Activated naive CD8-positive, alpha-beta T cell treated with anti-CD3 and anti-CD28 coated beads, Interleukin-2, amount 10 ng/mL, durations not matched to agents 7 days and 5 days (primary cell): ENCODE measurements at regions of chr1 and their contacts with region 1.

Region 1: GRCh38 chr1:225467193-225468020 is 39.6 kb upstream of the LBR start:
- DNase-seq: peak; percentile 84
- ATAC-seq: peak; percentile 87
- H3K4me3 Mint-ChIP-seq: peak overlapping the region; percentile 92
- H3K27ac Mint-ChIP-seq: peak overlapping the region; percentile 97
- H3K4me1 Mint-ChIP-seq: peaks cover 24% of the 10 kb centered on the region
- H3K27me3 Mint-ChIP-seq: no peaks in the 10 kb centered on the region

Region 2: GRCh38 chr1:225428068-225428880 is 39.1 kb before region 1 on chr1:
- POLR2A ChIA-PET with region 1: interaction called, 92 read pairs
- DNase-seq: peak; percentile 94
- ATAC-seq: peak; percentile 93
- H3K4me3 Mint-ChIP-seq: peak overlapping the region; percentile 87
- H3K27ac Mint-ChIP-seq: peak overlapping the region; percentile 89
- H3K4me1 Mint-ChIP-seq: peaks cover 43% of the 10 kb centered on the region
- H3K27me3 Mint-ChIP-seq: peaks cover 2% of the 10 kb centered on the region

Region 3: DNA sequence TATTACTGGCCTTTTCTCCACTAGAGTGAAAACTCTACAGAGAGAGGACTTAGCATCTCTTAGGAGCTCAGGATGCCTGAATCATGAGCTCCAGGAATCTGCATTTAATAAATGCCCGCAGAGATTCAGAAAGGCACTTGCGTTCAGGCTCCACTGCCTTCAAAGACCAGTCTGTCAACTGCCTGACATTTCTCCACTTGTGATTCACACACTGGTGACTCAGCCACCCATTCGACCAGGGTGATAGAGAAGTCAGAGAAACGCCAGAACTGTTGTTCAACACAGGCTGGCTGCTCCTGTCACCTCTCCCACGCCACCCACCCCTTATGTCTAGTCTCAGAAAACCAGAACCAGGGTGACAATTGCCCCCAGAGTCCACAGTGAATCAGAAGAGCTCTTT is 12.7 kb before region 1 on chr1:
- POLR2A ChIA-PET with region 1: interaction called, 226 read pairs
- DNase-seq: no peak
- ATAC-seq: peak; percentile 78
- H3K4me3 Mint-ChIP-seq: no peak overlapping the region
- H3K27ac Mint-ChIP-seq: peak overlapping the region; percentile 4
- H3K4me1 Mint-ChIP-seq: peaks cover 28% of the 10 kb centered on the region
- H3K27me3 Mint-ChIP-seq: no peaks in the 10 kb centered on the region

Region 4: DNA sequence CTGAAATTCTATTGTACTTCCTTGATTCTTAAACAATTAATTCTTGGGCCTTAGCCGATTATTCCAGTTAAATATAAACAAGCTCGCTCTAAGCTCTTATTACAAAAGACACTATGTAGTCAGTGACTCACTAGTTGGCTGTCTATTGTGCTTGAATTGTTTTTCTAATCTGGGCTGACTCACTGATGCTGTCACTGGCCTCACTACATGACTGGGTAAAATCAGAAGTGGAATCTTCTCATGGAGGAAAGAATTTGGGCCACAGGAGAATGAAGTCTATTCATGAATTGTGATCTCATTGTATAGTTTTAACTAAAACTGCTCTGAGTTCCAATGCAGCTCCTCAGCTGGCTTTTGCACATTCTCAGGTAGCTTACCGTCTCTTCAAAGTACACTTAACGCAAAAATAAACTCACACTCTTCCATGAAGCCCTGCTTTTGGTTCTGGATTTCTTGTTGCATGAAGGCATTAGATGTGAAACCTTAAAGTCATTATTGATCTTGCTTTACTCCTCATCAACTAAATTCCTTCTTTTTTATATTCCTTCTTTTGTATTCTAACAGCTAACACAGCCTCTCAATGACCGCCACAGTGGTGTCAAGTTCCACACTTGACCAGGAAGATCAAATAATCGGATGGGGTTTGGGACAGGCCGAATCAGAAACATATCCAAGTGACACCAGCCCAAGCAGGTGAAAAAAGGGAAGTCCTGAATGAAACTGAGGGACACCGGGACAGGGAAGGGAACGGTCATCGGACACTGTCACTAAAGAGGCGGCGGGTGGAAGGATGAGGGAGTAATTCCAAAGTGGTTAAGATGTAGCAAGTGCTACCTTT is 41.4 kb after region 1 on chr1:
- POLR2A ChIA-PET with region 1: no interaction called
- DNase-seq: no peak
- ATAC-seq: no peak
- H3K4me3 Mint-ChIP-seq: no peak overlapping the region
- H3K27ac Mint-ChIP-seq: no peak overlapping the region
- H3K4me1 Mint-ChIP-seq: peaks cover 3% of the 10 kb centered on the region
- H3K27me3 Mint-ChIP-seq: peaks cover 9% of the 10 kb centered on the region

Region 5: DNA sequence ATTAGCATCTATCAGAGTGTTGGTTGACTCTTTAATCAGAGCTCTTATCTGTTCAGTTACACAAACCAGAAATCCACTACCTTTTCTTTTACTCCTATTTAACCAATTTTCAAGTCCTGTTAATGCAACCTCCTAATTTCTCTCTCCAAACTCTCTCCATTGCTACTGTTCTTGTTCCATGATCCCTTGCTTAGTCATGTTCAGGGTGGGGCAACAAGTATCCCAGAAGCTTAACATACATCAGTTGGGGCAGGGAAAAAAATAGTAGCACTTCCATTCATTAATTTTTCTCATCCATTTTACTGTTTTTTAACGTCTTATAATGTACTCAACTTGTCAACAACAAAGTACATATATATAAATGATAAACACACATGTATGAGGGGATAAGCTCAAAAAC is 71.7 kb after region 1 on chr1:
- POLR2A ChIA-PET with region 1: no interaction called
- DNase-seq: no peak
- ATAC-seq: no peak
- H3K4me3 Mint-ChIP-seq: no peak overlapping the region
- H3K27ac Mint-ChIP-seq: no peak overlapping the region
- H3K4me1 Mint-ChIP-seq: no peaks in the 10 kb centered on the region
- H3K27me3 Mint-ChIP-seq: peaks cover 20% of the 10 kb centered on the region

Region 6: GRCh38 chr1:225881969-225882693 is 414.7 kb after region 1 on chr1 and contains the start of gene TMEM63A:
- POLR2A ChIA-PET with region 1: interaction called, 12 read pairs
- DNase-seq: peak; percentile 91
- ATAC-seq: peak; percentile 78
- H3K4me3 Mint-ChIP-seq: peak within 1 kb of the TSS; percentile 87
- H3K27ac Mint-ChIP-seq: peak within 1 kb of the TSS; percentile 90
- H3K4me1 Mint-ChIP-seq: peaks cover 40% of the 10 kb centered on the region
- H3K27me3 Mint-ChIP-seq: peaks cover 7% of the 10 kb centered on the region
- total RNA-seq, gene TMEM63A: 196 to 198 TPM

Region 7: DNA sequence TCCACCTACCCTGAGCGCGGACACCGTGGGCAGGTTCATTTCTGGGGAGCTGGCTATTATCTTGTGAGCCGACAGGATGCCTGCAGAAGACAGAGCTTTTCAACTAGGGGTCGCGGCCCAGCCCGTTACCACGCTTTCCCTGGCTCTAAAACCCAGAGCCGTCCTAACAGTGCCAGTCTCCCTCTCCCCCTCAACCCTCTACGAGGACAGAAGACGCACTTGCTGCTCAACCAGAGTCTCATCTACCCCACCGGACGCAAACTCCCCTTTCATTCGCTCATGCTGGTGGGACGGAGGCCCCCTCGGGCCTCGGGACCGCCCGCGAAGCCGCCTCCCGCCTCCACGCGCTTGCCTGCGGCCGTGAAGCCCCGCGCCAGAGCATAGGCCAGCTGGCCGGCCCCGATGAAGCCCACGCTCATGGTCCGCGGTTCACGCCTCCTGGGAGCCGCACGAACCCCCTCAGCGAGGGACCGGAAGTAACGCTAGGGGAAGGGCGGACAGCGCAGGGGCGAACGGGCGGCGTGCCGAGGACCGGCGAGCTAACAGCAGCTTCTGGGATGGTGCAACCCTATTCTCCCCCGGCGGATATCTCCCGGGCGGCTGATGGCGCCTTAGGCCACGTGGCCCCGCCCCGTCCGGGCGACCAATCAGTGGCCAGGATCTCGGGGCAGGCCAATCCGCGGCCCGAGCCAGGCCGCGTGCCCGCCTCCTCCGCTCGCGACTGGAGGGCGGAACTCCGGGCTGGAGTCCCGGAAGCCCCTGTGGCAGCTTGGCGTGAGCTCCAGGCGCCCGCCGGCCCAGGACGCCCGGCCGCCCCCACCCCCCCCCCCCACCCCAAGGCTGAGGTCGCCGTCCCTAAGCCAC is 456.5 kb after region 1 on chr1 and contains the start of gene PYCR2:
- POLR2A ChIA-PET with region 1: interaction called, 19 read pairs
- DNase-seq: peak; percentile 97
- ATAC-seq: peak; percentile 95
- H3K4me3 Mint-ChIP-seq: peak within 1 kb of the TSS; percentile 96
- H3K27ac Mint-ChIP-seq: peak within 1 kb of the TSS; percentile 95
- H3K4me1 Mint-ChIP-seq: peaks cover 43% of the 10 kb centered on the region
- H3K27me3 Mint-ChIP-seq: no peaks in the 10 kb centered on the region
- total RNA-seq, gene PYCR2: 118 to 125 TPM